ENCODE measurements at regions of chr20 and their contacts with region 1.

Region 1: DNA sequence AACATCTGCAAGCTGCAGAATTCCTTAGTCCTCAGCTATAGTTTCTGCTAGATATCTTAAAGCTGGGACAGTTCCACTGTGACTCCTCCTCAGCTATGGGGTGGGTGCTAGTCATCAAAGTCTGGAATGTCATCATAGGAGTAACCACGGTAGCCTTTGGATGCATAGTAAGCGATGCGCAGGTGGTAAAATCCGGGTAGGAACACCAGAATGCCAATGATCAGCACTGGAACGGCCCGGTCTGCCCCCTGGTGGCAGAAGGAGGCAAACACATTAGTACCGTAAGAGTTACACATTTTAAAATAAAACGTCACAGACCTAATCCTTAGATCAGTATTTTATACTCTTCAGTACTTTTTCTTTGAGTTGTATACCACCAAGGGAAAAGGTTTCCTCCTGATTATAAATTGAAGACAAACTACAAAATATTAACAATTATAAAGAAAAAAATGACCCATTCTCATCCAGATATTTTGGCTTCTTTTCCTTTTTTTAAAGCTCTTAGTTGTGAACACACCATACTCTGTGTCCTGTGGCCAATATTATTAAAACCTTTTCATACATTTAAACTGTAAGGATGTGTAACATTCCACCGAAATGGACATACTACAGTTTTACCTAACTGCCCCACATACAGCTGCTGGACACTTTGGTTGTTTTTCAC is 18.9 kb downstream of the PCNA start:
- DNase-seq: peak; percentile 65
- ATAC-seq: peak; percentile 87
- H3K4me3 Mint-ChIP-seq: no peak overlapping the region
- H3K27ac Mint-ChIP-seq: peak overlapping the region; percentile 53
- H3K4me1 Mint-ChIP-seq: peaks cover 5% of the 10 kb centered on the region
- H3K27me3 Mint-ChIP-seq: no peaks in the 10 kb centered on the region
- CTCF ChIP-seq: peak; percentile 63

Region 2: DNA sequence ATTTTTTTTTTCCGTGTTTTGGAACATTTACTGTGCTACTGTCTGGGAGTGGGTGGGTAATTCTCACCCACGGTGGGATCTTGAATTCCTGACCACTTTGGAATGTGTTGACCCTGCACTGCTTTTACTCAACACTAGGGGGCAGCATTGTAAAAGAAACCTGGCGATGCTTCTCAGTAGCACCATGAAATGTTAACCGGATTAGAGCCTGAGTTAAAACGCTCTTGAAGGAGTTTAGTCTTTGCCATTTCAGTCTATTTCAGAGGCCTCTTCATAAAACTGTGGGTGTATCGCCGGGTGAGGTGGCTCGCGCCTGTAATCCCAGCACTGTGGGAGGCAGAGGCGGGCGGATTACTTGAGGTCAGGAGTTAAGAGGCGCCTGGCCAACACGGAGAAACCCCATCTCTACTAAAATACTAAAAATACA is 493.5 kb before region 1 on chr20:
- CTCF ChIA-PET with region 1: interaction called, 4 read pairs
- POLR2A ChIA-PET with region 1: no interaction called
- intact Hi-C with region 1: loop called (anchors 1 kb)
- DNase-seq: peak; percentile 31
- ATAC-seq: peak; percentile 93
- H3K4me3 Mint-ChIP-seq: no peak overlapping the region
- H3K27ac Mint-ChIP-seq: peak overlapping the region; percentile 13
- H3K4me1 Mint-ChIP-seq: peaks cover 9% of the 10 kb centered on the region
- H3K27me3 Mint-ChIP-seq: peaks cover 3% of the 10 kb centered on the region
- CTCF ChIP-seq: peak; percentile 96

Region 3: GRCh38 chr20:4949833-4950178 is 151.0 kb before region 1 on chr20:
- CTCF ChIA-PET with region 1: interaction called, 20 read pairs
- POLR2A ChIA-PET with region 1: no interaction called
- intact Hi-C with region 1: no loop called
- DNase-seq: no peak
- ATAC-seq: peak; percentile 53
- H3K4me3 Mint-ChIP-seq: peak overlapping the region; percentile 76
- H3K27ac Mint-ChIP-seq: peak overlapping the region; percentile 70
- H3K4me1 Mint-ChIP-seq: peaks cover 63% of the 10 kb centered on the region
- H3K27me3 Mint-ChIP-seq: no peaks in the 10 kb centered on the region
- CTCF ChIP-seq: no peak

Region 4: DNA sequence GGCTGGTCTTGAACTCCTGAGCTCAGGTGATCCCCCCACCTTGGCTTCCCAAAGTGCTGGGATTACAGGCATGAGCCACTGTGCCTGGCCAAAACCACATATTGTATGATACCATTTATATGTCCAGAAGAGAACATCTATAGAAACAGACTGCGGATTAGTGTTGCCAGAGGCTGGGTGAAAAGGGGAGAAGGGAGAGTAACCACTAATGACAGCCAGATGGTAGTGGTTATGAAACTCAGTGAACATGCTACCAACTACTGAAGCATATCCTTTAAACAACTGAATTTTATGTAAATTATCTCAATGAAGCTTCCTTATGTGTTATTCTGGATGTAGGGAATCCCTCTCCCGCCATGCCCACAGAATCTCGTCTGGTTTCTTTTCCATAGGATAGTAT is 115.2 kb before region 1 on chr20:
- CTCF ChIA-PET with region 1: interaction called, 12 read pairs
- POLR2A ChIA-PET with region 1: interaction called, 4 read pairs
- intact Hi-C with region 1: loop called (anchors 2 kb)
- DNase-seq: no peak
- ATAC-seq: peak; percentile 59
- H3K4me3 Mint-ChIP-seq: peak overlapping the region; percentile 66
- H3K27ac Mint-ChIP-seq: peak overlapping the region; percentile 92
- H3K4me1 Mint-ChIP-seq: peaks cover 92% of the 10 kb centered on the region
- H3K27me3 Mint-ChIP-seq: no peaks in the 10 kb centered on the region
- CTCF ChIP-seq: no peak

Region 5: DNA sequence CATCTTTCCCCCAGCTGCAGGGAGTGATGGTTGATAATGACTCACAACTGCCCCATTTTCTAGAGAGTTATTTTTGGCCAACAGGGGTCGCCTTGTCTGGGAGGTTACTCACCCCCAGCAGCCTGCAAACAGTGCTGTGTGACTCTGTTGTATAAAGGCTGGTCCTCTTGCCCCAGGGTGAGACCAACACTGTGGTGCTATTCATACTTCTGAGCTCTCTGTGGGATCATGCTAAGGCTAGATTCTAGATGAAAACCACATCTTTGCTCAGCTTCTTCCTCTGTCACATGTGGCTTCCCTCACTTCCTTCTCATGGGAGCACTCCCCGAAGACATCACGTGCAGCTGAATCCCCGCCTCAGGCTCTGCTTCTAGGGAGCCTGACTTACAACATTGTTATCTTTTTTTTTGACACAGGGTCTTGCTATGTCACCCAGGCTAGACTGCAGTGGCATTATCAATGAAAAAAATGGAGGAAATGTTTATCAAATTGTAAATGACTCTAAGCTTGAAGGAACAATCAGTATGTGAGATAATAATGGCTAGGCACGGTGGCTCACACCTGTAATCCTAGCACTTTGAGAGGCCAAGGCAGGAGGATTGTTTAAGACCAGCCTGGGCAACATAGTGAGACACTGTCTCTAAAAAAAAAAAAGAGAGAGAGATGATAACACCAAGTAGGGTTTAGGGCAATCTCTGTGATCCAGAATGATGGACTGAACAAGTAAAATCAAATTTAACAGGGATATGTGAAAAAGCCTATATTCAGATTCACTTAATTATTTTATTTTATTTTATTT is 43.8 kb before region 1 on chr20:
- CTCF ChIA-PET with region 1: interaction called, 66 read pairs
- POLR2A ChIA-PET with region 1: interaction called, 5 read pairs
- intact Hi-C with region 1: loop called (anchors 1 kb)
- DNase-seq: peak; percentile 20
- ATAC-seq: peak; percentile 92
- H3K4me3 Mint-ChIP-seq: no peak overlapping the region
- H3K27ac Mint-ChIP-seq: peak overlapping the region; percentile 73
- H3K4me1 Mint-ChIP-seq: peaks cover 16% of the 10 kb centered on the region
- H3K27me3 Mint-ChIP-seq: no peaks in the 10 kb centered on the region
- CTCF ChIP-seq: no peak

Region 6: GRCh38 chr20:5191829-5192569 is 91.2 kb after region 1 on chr20:
- CTCF ChIA-PET with region 1: interaction called, 14 read pairs
- POLR2A ChIA-PET with region 1: no interaction called
- intact Hi-C with region 1: no loop called
- DNase-seq: no peak
- ATAC-seq: peak; percentile 78
- H3K4me3 Mint-ChIP-seq: no peak overlapping the region
- H3K27ac Mint-ChIP-seq: peak overlapping the region; percentile 77
- H3K4me1 Mint-ChIP-seq: peaks cover 8% of the 10 kb centered on the region
- H3K27me3 Mint-ChIP-seq: no peaks in the 10 kb centered on the region
- CTCF ChIP-seq: no peak

Measured in activated B cell treated with CpG ODN at 0.5 μM for 24 hours (primary cell).